AG04449 (cell line): ENCODE measurements at regions of chr16 and their contacts with region 1.

Region 1: GRCh38 chr16:19601083-19601976 is 45.8 kb downstream of the VPS35L start:
- DNase-seq: no peak
- H3K4me3 ChIP-seq: no peak overlapping the region
- CTCF ChIP-seq: peak; percentile 37

Region 2: GRCh38 chr16:19555162-19555937 is 46.0 kb before region 1 on chr16 and contains the start of gene VPS35L:
- CTCF ChIA-PET with region 1: interaction called, 16 read pairs
- POLR2A ChIA-PET with region 1: no interaction called
- DNase-seq: peak; percentile 90
- H3K4me3 ChIP-seq: peak within 1 kb of the TSS; percentile 91
- CTCF ChIP-seq: peak; percentile 84

Region 3: GRCh38 chr16:19583665-19584300 is 17.5 kb before region 1 on chr16:
- CTCF ChIA-PET with region 1: interaction called, 147 read pairs
- POLR2A ChIA-PET with region 1: no interaction called
- DNase-seq: no peak
- H3K4me3 ChIP-seq: no peak overlapping the region
- CTCF ChIP-seq: peak; percentile 82

Region 4: GRCh38 chr16:19613834-19614233 is 12.5 kb after region 1 on chr16:
- CTCF ChIA-PET with region 1: interaction called, 42 read pairs
- POLR2A ChIA-PET with region 1: no interaction called
- DNase-seq: no peak
- H3K4me3 ChIP-seq: no peak overlapping the region
- CTCF ChIP-seq: no peak

Region 5: GRCh38 chr16:19879241-19879792 is 278.0 kb after region 1 on chr16:
- CTCF ChIA-PET with region 1: interaction called, 250 read pairs
- POLR2A ChIA-PET with region 1: no interaction called
- DNase-seq: no peak
- H3K4me3 ChIP-seq: no peak overlapping the region
- CTCF ChIP-seq: no peak

Region 6: DNA sequence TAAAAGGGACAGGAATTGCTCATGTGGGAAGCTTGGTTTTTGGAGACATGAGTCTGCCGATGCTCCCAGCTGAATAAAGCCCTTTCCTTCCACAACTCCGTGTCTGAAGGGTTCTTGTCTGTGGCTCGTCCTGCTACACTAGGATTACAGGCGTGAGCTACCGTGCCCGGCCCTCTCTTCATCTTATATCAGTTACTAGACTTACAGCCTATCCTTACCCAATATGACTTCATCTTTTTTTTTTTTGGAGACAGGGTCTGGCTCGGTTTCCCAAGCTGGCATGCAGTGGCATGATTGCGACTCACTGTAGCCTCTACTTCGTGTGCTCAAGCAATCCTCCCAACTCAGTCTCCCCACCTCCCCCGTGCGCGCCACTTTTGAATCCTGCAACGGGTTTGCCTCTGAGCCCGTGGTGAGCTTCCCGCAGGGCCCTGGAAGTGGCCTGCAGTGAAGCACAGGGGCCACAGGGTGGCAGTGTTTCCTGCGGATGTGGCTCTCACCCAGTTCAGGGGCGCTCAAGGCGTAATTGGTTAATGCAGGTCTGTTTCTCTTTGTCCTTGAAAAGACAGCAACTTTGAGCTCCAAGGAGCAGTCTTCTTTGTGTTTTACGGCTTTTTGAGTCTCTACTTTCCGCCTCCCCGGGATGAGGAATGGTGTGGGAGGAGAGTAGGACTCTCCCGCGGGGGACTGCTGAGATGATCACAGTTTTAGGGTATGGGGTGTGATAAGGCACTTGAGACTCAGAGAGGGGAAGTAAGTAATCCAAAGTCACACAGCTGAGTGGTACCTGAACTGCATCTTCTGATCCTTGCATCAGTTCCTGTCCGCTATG is 306.0 kb after region 1 on chr16:
- CTCF ChIA-PET with region 1: interaction called, 14 read pairs
- POLR2A ChIA-PET with region 1: no interaction called
- DNase-seq: no peak
- H3K4me3 ChIP-seq: no peak overlapping the region
- CTCF ChIP-seq: peak; percentile 100